ENCODE measurements at regions of chr7 and their contacts with region 1.

Region 1: DNA sequence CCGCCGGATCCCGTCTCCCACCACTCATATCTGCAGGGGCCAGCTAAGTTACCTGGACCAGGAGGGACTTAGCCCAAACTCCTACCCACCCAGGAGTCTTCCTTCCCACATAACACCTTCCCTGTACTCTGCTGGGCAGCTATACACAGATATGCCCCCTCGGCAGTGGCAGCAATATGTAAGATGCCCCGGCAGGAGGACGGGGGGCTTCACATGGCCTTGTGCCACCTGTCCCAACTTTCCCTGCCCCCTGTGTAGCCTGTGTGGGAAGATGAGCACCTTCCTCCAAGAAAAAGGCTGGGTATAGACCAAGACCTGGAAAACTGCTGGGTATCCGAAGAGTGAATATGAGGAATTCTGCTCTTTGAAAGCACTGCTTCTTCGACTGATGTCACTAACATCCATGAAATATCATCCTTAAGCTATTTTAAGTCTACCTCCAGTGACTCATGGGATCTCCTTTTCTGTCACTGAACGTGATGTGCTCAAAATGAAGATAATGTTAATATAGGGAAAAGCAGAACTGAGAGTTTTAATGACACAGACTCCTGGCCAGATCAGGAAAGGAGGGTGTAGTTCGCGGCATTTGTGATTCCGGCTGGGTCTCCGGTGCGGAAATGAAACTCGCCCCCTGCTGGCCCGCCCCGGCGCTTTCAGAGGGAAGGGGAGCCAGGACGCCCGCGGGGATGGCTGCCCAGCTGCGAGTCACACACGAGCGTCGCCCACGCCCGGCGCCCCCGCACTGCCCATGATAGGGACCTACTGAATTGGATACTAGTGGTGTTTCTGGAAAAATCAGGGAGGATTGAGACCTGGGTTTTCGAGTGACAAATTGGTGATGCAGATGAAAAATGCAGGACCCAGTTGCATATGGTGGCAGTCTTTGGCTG is 256.9 kb upstream of the NFE2L3 start:
- DNase-seq: peak; percentile 89
- ATAC-seq: peak; percentile 83
- H3K4me3 ChIP-seq: peak overlapping the region in 3 of 5 experiments; percentile 12 to 27 (median 19)
- H3K4me3 Mint-ChIP-seq: peak overlapping the region; percentile 75
- H3K27ac ChIP-seq: no peak overlapping the region
- H3K27ac Mint-ChIP-seq: peak overlapping the region; percentile 52
- H3K4me1 ChIP-seq: peaks cover 29 to 33% of the 10 kb centered on the region in 2 donors
- H3K4me1 Mint-ChIP-seq: peaks cover 31% of the 10 kb centered on the region
- H3K27me3 ChIP-seq: peaks cover 0 to 56% (median 43%) of the 10 kb centered on the region in 4 experiments
- H3K27me3 Mint-ChIP-seq: peaks cover 63% of the 10 kb centered on the region
- CTCF ChIP-seq: peak; percentile 91

Region 2: GRCh38 chr7:25908154-25908949 is 13.2 kb after region 1 on chr7:
- CTCF ChIA-PET with region 1: interaction called, 12 read pairs
- POLR2A ChIA-PET with region 1: no interaction called
- intact Hi-C with region 1: no loop called
- DNase-seq: no peak
- ATAC-seq: no peak
- H3K4me3 ChIP-seq: no peak overlapping the region
- H3K4me3 Mint-ChIP-seq: no peak overlapping the region
- H3K27ac ChIP-seq: no peak overlapping the region
- H3K27ac Mint-ChIP-seq: no peak overlapping the region
- H3K4me1 ChIP-seq: no peaks in the 10 kb centered on the region
- H3K4me1 Mint-ChIP-seq: no peaks in the 10 kb centered on the region
- H3K27me3 ChIP-seq: peaks cover 0 to 14% (median 3%) of the 10 kb centered on the region in 4 experiments
- H3K27me3 Mint-ChIP-seq: peaks cover 17% of the 10 kb centered on the region
- CTCF ChIP-seq: no peak

Region 3: GRCh38 chr7:26061688-26062150 is 166.6 kb after region 1 on chr7:
- CTCF ChIA-PET with region 1: interaction called, 116 read pairs
- POLR2A ChIA-PET with region 1: no interaction called
- intact Hi-C with region 1: loop called (anchors 1 kb)
- DNase-seq: peak; percentile 77
- ATAC-seq: peak; percentile 83
- H3K4me3 ChIP-seq: no peak overlapping the region
- H3K4me3 Mint-ChIP-seq: no peak overlapping the region
- H3K27ac ChIP-seq: no peak overlapping the region
- H3K27ac Mint-ChIP-seq: no peak overlapping the region
- H3K4me1 ChIP-seq: no peaks in the 10 kb centered on the region
- H3K4me1 Mint-ChIP-seq: peaks cover 5% of the 10 kb centered on the region
- H3K27me3 ChIP-seq: peaks cover 0 to 38% (median 14%) of the 10 kb centered on the region in 4 experiments
- H3K27me3 Mint-ChIP-seq: peaks cover 60% of the 10 kb centered on the region
- CTCF ChIP-seq: peak; percentile 92

Region 4: GRCh38 chr7:26151953-26152781 is 257.0 kb after region 1 on chr7 and contains the start of gene NFE2L3:
- CTCF ChIA-PET with region 1: interaction called, 8 read pairs
- POLR2A ChIA-PET with region 1: no interaction called
- intact Hi-C with region 1: loop called (anchors 5 kb)
- DNase-seq: peak; percentile 89
- ATAC-seq: peak; percentile 89
- H3K4me3 ChIP-seq: peak within 1 kb of the TSS; percentile 35 to 90 (median 62)
- H3K4me3 Mint-ChIP-seq: peak within 1 kb of the TSS; percentile 97
- H3K27ac ChIP-seq: peak within 1 kb of the TSS; percentile 16 to 65
- H3K27ac Mint-ChIP-seq: peak within 1 kb of the TSS; percentile 88
- H3K4me1 ChIP-seq: peaks cover 34 to 42% of the 10 kb centered on the region in 2 donors
- H3K4me1 Mint-ChIP-seq: peaks cover 48% of the 10 kb centered on the region
- H3K27me3 ChIP-seq: no peaks in the 10 kb centered on the region
- H3K27me3 Mint-ChIP-seq: no peaks in the 10 kb centered on the region
- CTCF ChIP-seq: no peak
- total RNA-seq, gene NFE2L3: 1.6 and 4.5 TPM in 2 replicates

Region 5: GRCh38 chr7:26291699-26292538 is 396.8 kb after region 1 on chr7 and contains the start of gene SNX10:
- CTCF ChIA-PET with region 1: interaction called, 7 read pairs
- POLR2A ChIA-PET with region 1: no interaction called
- intact Hi-C with region 1: loop called (anchors 2 kb)
- DNase-seq: peak; percentile 90
- ATAC-seq: peak; percentile 78
- H3K4me3 ChIP-seq: peak within 1 kb of the TSS; percentile 89 to 96 (median 90)
- H3K4me3 Mint-ChIP-seq: peak within 1 kb of the TSS; percentile 94
- H3K27ac ChIP-seq: peak within 1 kb of the TSS; percentile 60 to 82
- H3K27ac Mint-ChIP-seq: peak within 1 kb of the TSS; percentile 96
- H3K4me1 ChIP-seq: peaks cover 42 to 50% of the 10 kb centered on the region in 2 donors
- H3K4me1 Mint-ChIP-seq: peaks cover 45% of the 10 kb centered on the region
- H3K27me3 ChIP-seq: no peaks in the 10 kb centered on the region
- H3K27me3 Mint-ChIP-seq: no peaks in the 10 kb centered on the region
- CTCF ChIP-seq: peak; percentile 46
- total RNA-seq, gene SNX10: 26.5 and 33.6 TPM in 2 replicates

Region 6: GRCh38 chr7:26864309-26865093 is 969.4 kb after region 1 on chr7 and contains the start of gene SKAP2:
- CTCF ChIA-PET with region 1: no interaction called
- POLR2A ChIA-PET with region 1: no interaction called
- intact Hi-C with region 1: loop called (anchors 10 kb)
- DNase-seq: peak; percentile 97
- ATAC-seq: peak; percentile 85
- H3K4me3 ChIP-seq: peak within 1 kb of the TSS; percentile 73 to 95 (median 90)
- H3K4me3 Mint-ChIP-seq: peak within 1 kb of the TSS; percentile 100
- H3K27ac ChIP-seq: peak within 1 kb of the TSS; percentile 95
- H3K27ac Mint-ChIP-seq: peak within 1 kb of the TSS; percentile 98
- H3K4me1 ChIP-seq: peaks cover 0 to 23% of the 10 kb centered on the region in 2 donors
- H3K4me1 Mint-ChIP-seq: peaks cover 41% of the 10 kb centered on the region
- H3K27me3 ChIP-seq: no peaks in the 10 kb centered on the region
- H3K27me3 Mint-ChIP-seq: no peaks in the 10 kb centered on the region
- CTCF ChIP-seq: no peak
- total RNA-seq, gene SKAP2: 53.4 and 58.4 TPM in 2 replicates